CD4-positive, alpha-beta T cell (primary cell): ENCODE measurements at regions of chr17 and their contacts with region 1.

Region 1: DNA sequence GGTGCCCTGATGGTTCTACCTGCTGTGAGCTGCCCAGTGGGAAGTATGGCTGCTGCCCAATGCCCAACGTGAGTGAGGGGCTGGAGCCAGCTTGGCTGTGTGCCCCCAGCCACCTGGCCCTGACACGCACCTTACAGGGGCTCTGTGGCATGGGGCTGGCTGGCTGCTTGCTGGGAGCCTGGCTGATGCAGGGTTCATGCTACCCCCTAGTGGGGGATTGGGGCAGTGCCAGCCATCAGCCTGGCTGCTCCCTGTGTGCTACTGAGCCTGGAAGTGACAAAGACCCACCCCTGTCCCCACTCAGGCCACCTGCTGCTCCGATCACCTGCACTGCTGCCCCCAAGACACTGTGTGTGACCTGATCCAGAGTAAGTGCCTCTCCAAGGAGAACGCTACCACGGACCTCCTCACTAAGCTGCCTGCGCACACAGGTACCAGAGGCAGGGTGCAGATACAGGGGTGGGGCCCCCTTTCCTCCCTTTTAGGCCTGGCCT is 5.7 kb downstream of the GRN start:
- DNase-seq: peak; percentile 53 to 84 (median 68)
- ATAC-seq: peak; percentile 79
- H3K4me3 ChIP-seq: no peak overlapping the region
- H3K4me3 Mint-ChIP-seq: peak overlapping the region; percentile 52
- H3K27ac ChIP-seq: no peak overlapping the region
- H3K27ac Mint-ChIP-seq: no peak overlapping the region
- H3K4me1 ChIP-seq: peaks cover 26% of the 10 kb centered on the region
- H3K4me1 Mint-ChIP-seq: peaks cover 17% of the 10 kb centered on the region
- H3K27me3 ChIP-seq: no peaks in the 10 kb centered on the region
- H3K27me3 Mint-ChIP-seq: peaks cover 4% of the 10 kb centered on the region
- CTCF ChIP-seq: peak; percentile 83

Region 2: GRCh38 chr17:44315760-44316731 is 34.7 kb before region 1 on chr17:
- CTCF ChIA-PET with region 1: no interaction called
- POLR2A ChIA-PET with region 1: no interaction called
- intact Hi-C with region 1: no loop called
- DNase-seq: peak in 1 of 14 experiments; percentile 27
- ATAC-seq: no peak
- H3K4me3 ChIP-seq: peak overlapping the region; percentile 12
- H3K4me3 Mint-ChIP-seq: peak overlapping the region; percentile 68
- H3K27ac ChIP-seq: no peak overlapping the region
- H3K27ac Mint-ChIP-seq: no peak overlapping the region
- H3K4me1 ChIP-seq: peaks cover 20% of the 10 kb centered on the region
- H3K4me1 Mint-ChIP-seq: peaks cover 21% of the 10 kb centered on the region
- H3K27me3 ChIP-seq: peaks cover 27 to 28% of the 10 kb centered on the region in 2 experiments
- H3K27me3 Mint-ChIP-seq: peaks cover 51% of the 10 kb centered on the region
- CTCF ChIP-seq: no peak

Region 3: GRCh38 chr17:44363613-44364159 is 12.9 kb after region 1 on chr17 and contains the start of gene FAM171A2:
- CTCF ChIA-PET with region 1: interaction called, 10 read pairs
- POLR2A ChIA-PET with region 1: interaction called, 14 read pairs
- intact Hi-C with region 1: no loop called
- DNase-seq: peak; percentile 36 to 89 (median 64)
- ATAC-seq: peak; percentile 93
- H3K4me3 ChIP-seq: peak within 1 kb of the TSS; percentile 54
- H3K4me3 Mint-ChIP-seq: peak within 1 kb of the TSS; percentile 85
- H3K27ac ChIP-seq: no peak within 1 kb of the TSS
- H3K27ac Mint-ChIP-seq: no peak within 1 kb of the TSS
- H3K4me1 ChIP-seq: peaks cover 13% of the 10 kb centered on the region
- H3K4me1 Mint-ChIP-seq: peaks cover 7% of the 10 kb centered on the region
- H3K27me3 ChIP-seq: peaks cover 21 to 22% of the 10 kb centered on the region in 2 experiments
- H3K27me3 Mint-ChIP-seq: peaks cover 50% of the 10 kb centered on the region
- CTCF ChIP-seq: peak; percentile 35
- total RNA-seq, gene FAM171A2: 0.08 to 0.19 TPM

Region 4: GRCh38 chr17:44432254-44433157 is 81.7 kb after region 1 on chr17:
- CTCF ChIA-PET with region 1: no interaction called
- POLR2A ChIA-PET with region 1: no interaction called
- intact Hi-C with region 1: no loop called
- DNase-seq: no peak
- ATAC-seq: no peak
- H3K4me3 ChIP-seq: no peak overlapping the region
- H3K4me3 Mint-ChIP-seq: no peak overlapping the region
- H3K27ac ChIP-seq: no peak overlapping the region
- H3K27ac Mint-ChIP-seq: no peak overlapping the region
- H3K4me1 ChIP-seq: no peaks in the 10 kb centered on the region
- H3K4me1 Mint-ChIP-seq: no peaks in the 10 kb centered on the region
- H3K27me3 ChIP-seq: no peaks in the 10 kb centered on the region
- H3K27me3 Mint-ChIP-seq: no peaks in the 10 kb centered on the region
- CTCF ChIP-seq: no peak

Region 5: GRCh38 chr17:44464037-44464436 is 113.3 kb after region 1 on chr17:
- CTCF ChIA-PET with region 1: no interaction called
- POLR2A ChIA-PET with region 1: no interaction called
- intact Hi-C with region 1: no loop called
- DNase-seq: no peak
- ATAC-seq: no peak
- H3K4me3 ChIP-seq: no peak overlapping the region
- H3K4me3 Mint-ChIP-seq: no peak overlapping the region
- H3K27ac ChIP-seq: no peak overlapping the region
- H3K27ac Mint-ChIP-seq: peak overlapping the region; percentile 1
- H3K4me1 ChIP-seq: no peaks in the 10 kb centered on the region
- H3K4me1 Mint-ChIP-seq: peaks cover 47% of the 10 kb centered on the region
- H3K27me3 ChIP-seq: no peaks in the 10 kb centered on the region
- H3K27me3 Mint-ChIP-seq: no peaks in the 10 kb centered on the region
- CTCF ChIP-seq: no peak